ENCODE measurements at regions of chr2 and their contacts with region 1.

Region 1: GRCh38 chr2:7083577-7084509 is 166.6 kb downstream of the RNF144A start:
- H3K4me3 Mint-ChIP-seq: no peak overlapping the region
- H3K27ac Mint-ChIP-seq: no peak overlapping the region
- H3K4me1 Mint-ChIP-seq: no peaks in the 10 kb centered on the region
- H3K27me3 Mint-ChIP-seq: no peaks in the 10 kb centered on the region

Region 2: GRCh38 chr2:6877402-6878304 is 206.2 kb before region 1 on chr2 and contains the start of gene RSAD2:
- intact Hi-C with region 1: no loop called
- H3K4me3 Mint-ChIP-seq: peak within 1 kb of the TSS; percentile 72
- H3K27ac Mint-ChIP-seq: peak within 1 kb of the TSS; percentile 57
- H3K4me1 Mint-ChIP-seq: peaks cover 35% of the 10 kb centered on the region
- H3K27me3 Mint-ChIP-seq: peaks cover 9% of the 10 kb centered on the region

Region 3: GRCh38 chr2:7037340-7038333 is 46.2 kb before region 1 on chr2:
- intact Hi-C with region 1: loop called (anchors 2 kb)
- H3K4me3 Mint-ChIP-seq: no peak overlapping the region
- H3K27ac Mint-ChIP-seq: no peak overlapping the region
- H3K4me1 Mint-ChIP-seq: no peaks in the 10 kb centered on the region
- H3K27me3 Mint-ChIP-seq: no peaks in the 10 kb centered on the region